CD8-positive, alpha-beta T cell (primary cell): ENCODE measurements at regions of chr2 and their contacts with region 1.

Region 1: GRCh38 chr2:160165081-160165480 is 35.0 kb downstream of the ITGB6 start:
- DNase-seq: no peak
- ATAC-seq: no peak
- H3K4me3 ChIP-seq: no peak overlapping the region
- H3K4me3 Mint-ChIP-seq: no peak overlapping the region
- H3K27ac ChIP-seq: no peak overlapping the region
- H3K27ac Mint-ChIP-seq: no peak overlapping the region
- H3K4me1 ChIP-seq: no peaks in the 10 kb centered on the region
- H3K4me1 Mint-ChIP-seq: no peaks in the 10 kb centered on the region
- H3K27me3 ChIP-seq: no peaks in the 10 kb centered on the region
- H3K27me3 Mint-ChIP-seq: no peaks in the 10 kb centered on the region
- CTCF ChIP-seq: no peak

Region 2: GRCh38 chr2:160197587-160197986 is 32.5 kb after region 1 on chr2:
- CTCF ChIA-PET with region 1: no interaction called
- POLR2A ChIA-PET with region 1: no interaction called
- intact Hi-C with region 1: loop called in 1 of 2 experiments (anchors 1 kb)
- DNase-seq: peak in 2 of 9 experiments; percentile 16 to 32
- ATAC-seq: no peak
- H3K4me3 ChIP-seq: no peak overlapping the region
- H3K4me3 Mint-ChIP-seq: no peak overlapping the region
- H3K27ac ChIP-seq: no peak overlapping the region
- H3K27ac Mint-ChIP-seq: no peak overlapping the region
- H3K4me1 ChIP-seq: no peaks in the 10 kb centered on the region
- H3K4me1 Mint-ChIP-seq: peaks cover 2% of the 10 kb centered on the region
- H3K27me3 ChIP-seq: no peaks in the 10 kb centered on the region
- H3K27me3 Mint-ChIP-seq: no peaks in the 10 kb centered on the region
- CTCF ChIP-seq: no peak

Region 3: DNA sequence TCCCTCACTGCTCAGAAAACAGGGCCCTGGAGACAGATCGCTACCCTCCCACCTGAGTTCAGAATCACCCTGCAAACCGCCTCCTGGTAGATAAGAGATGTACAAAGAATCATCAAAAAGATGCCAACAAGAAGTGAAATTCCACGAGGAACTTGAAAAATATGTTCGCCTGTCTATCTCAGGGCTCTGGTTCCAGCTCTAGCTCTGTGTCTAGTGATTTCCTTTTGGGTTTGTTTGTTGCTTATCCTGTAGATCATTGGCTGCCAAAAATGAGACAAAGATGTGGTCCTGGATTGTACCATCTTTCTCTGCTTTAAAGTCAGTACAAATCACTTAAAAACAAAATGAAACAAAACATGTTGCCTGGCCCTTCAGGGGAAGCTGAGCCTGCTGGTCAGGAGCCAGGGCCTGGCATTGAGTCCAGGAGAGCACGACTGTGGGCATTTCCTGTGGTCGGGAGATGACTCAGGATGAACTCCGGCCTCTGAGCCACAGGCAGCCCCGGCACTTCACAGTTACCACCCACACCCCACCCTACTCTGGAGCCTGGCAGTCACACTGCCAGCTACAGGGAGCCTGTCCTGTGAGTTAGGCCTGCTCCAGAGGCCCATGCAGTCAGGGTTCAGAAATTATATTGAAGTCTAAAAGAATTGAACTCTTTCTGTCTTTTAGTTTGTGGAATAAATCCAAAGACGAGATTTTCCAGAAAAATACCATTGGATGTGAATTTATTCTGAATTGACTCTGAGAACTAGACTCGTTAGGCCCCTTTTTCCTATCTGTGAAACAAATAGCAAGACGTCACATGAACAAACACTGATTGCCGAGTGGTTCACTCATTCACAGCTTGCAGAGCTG is 43.0 kb after region 1 on chr2:
- CTCF ChIA-PET with region 1: no interaction called
- POLR2A ChIA-PET with region 1: no interaction called
- intact Hi-C with region 1: no loop called
- DNase-seq: no peak
- ATAC-seq: no peak
- H3K4me3 ChIP-seq: no peak overlapping the region
- H3K4me3 Mint-ChIP-seq: no peak overlapping the region
- H3K27ac ChIP-seq: no peak overlapping the region
- H3K27ac Mint-ChIP-seq: no peak overlapping the region
- H3K4me1 ChIP-seq: no peaks in the 10 kb centered on the region
- H3K4me1 Mint-ChIP-seq: peaks cover 7% of the 10 kb centered on the region
- H3K27me3 ChIP-seq: no peaks in the 10 kb centered on the region
- H3K27me3 Mint-ChIP-seq: no peaks in the 10 kb centered on the region
- CTCF ChIP-seq: no peak

Region 4: DNA sequence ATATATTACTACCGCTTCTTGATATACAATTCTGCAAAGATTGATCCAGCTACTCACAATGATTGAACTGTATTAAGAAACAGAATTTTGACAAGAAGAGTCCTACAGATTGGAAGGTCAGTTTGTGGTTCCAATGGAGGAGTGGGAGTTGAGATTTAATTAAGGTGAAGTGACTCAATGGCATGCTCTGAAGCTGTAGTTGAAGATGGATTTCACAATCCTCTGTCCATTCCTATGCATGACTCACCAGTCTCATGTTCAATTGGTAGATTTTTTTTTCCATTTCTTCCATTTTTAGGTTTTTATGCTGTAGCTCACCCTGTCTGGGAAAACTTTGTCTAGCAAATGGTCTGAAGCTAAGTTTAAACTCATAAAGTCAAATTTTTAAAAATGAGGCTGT is 1825.7 kb after region 1 on chr2:
- CTCF ChIA-PET with region 1: no interaction called
- POLR2A ChIA-PET with region 1: no interaction called
- intact Hi-C with region 1: no loop called
- DNase-seq: no peak
- ATAC-seq: no peak
- H3K4me3 ChIP-seq: no peak overlapping the region
- H3K4me3 Mint-ChIP-seq: no peak overlapping the region
- H3K27ac ChIP-seq: no peak overlapping the region
- H3K27ac Mint-ChIP-seq: no peak overlapping the region
- H3K4me1 ChIP-seq: peaks cover 42% of the 10 kb centered on the region
- H3K4me1 Mint-ChIP-seq: peaks cover 44% of the 10 kb centered on the region
- H3K27me3 ChIP-seq: no peaks in the 10 kb centered on the region
- H3K27me3 Mint-ChIP-seq: no peaks in the 10 kb centered on the region
- CTCF ChIP-seq: no peak